ENCODE measurements at regions of chr10 and their contacts with region 1.

Region 1: DNA sequence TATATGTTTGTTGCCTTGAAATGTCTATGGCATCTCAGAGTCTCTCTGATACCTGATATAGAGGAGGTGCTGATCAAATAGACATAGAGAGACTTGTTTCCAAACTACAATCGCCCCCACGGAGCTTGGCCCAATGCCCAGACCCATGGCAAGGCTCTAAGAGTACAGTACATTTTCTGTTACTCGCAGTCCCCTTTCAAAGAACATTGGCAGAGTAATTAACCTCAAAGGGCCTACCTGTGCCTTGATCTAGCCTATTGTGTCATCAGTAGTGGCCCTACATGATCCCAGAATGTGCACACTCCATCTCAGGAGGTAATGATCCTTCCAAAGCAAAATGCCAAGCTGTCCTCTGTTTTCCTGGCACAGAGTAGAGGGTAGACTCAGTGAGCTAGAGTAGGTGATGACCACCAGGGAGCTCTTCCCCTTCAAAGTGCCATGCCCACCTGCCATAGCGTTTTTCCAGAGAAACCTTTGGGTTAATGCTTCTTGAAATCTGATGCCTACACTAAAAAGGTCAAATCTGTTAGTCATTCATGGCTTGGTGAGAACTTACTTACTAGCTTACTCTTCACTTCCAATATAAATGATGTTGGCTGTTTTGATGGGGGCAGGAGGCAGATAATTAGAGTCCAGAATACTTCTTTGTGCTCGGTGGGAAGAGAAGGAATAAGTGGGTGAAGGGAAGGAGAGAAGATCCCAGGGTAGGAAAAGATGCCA is 41.2 kb upstream of the ACSL5 start:
- DNase-seq: peak; percentile 32
- ATAC-seq: no peak

Region 2: GRCh38 chr10:112286837-112287818 is 45.5 kb before region 1 on chr10:
- intact Hi-C with region 1: no loop called
- DNase-seq: no peak
- ATAC-seq: peak; percentile 77

Region 3: GRCh38 chr10:112434988-112435619 is 102.4 kb after region 1 on chr10:
- intact Hi-C with region 1: loop called (anchors 10 kb)
- DNase-seq: no peak
- ATAC-seq: no peak